ENCODE measurements at regions of chr2 and their contacts with region 1.

Region 1: DNA sequence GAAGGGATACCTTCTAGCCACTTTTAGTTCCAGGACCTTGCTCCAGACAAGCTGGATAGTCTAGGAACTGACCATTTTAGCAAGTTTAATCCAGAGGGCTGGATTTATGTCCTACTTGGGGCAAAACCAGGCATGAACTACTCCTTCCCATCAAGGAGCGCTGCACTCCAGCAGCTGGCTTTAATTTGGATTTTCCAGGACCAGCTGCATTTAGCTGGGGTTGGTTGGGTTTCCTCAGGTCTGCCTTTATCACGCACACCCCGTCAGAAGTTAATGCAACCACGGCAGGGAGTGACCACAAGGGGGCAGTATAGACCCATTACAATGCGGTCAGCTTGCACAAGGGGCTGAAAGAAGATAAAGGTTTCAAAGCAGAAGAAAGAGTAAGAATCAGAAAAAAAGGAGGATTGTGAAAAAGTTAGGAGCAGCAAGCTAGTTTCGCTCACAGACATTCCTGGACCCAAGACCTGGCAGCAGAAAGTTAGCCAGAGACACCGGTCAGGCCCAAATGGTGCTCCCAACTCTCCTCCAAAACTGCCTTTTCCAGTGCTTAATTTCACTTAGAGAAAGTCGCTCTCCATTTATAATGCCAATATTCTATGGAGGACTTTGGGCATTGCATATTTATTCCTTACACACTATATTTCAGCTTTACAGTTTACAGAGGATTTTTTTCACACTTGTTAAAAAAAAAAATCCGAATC is 40.1 kb downstream of the SLC4A1AP start:
- DNase-seq: peak; percentile 73 to 90 (median 84)
- ATAC-seq: peak; percentile 84
- H3K4me3 ChIP-seq: no peak overlapping the region
- H3K4me3 Mint-ChIP-seq: no peak overlapping the region
- H3K27ac ChIP-seq: no peak overlapping the region
- H3K27ac Mint-ChIP-seq: no peak overlapping the region
- H3K4me1 ChIP-seq: no peaks in the 10 kb centered on the region
- H3K4me1 Mint-ChIP-seq: peaks cover 3% of the 10 kb centered on the region
- H3K27me3 ChIP-seq: no peaks in the 10 kb centered on the region
- H3K27me3 Mint-ChIP-seq: no peaks in the 10 kb centered on the region
- CTCF ChIP-seq: peak; percentile 84

Region 2: DNA sequence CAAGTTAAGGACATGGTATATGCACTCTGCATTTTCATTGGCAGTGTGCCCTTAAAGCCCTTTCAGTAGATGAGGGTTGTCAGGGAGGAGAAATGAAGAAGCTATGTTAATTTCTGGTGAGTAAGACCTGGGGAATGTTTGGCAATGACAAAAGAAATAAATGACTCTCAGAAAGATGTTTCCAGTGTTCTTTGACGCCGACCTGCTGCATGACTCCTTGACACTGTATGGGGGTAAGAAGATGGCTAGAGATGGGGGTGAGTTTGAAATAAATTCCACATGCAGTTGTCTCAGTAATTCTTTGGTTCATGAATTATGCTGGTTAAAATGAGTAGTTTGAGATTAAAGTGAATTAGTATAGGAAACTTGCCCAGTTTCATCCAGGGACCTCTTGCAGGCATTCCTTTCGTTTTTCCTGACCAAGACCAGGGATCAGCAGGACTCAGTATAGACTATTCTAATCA is 80.8 kb before region 1 on chr2:
- CTCF ChIA-PET with region 1: no interaction called
- POLR2A ChIA-PET with region 1: no interaction called
- intact Hi-C with region 1: no loop called
- DNase-seq: no peak
- ATAC-seq: no peak
- H3K4me3 ChIP-seq: no peak overlapping the region
- H3K4me3 Mint-ChIP-seq: no peak overlapping the region
- H3K27ac ChIP-seq: no peak overlapping the region
- H3K27ac Mint-ChIP-seq: no peak overlapping the region
- H3K4me1 ChIP-seq: peaks cover 4% of the 10 kb centered on the region
- H3K4me1 Mint-ChIP-seq: peaks cover 3% of the 10 kb centered on the region
- H3K27me3 ChIP-seq: no peaks in the 10 kb centered on the region
- H3K27me3 Mint-ChIP-seq: no peaks in the 10 kb centered on the region
- CTCF ChIP-seq: no peak

Region 3: GRCh38 chr2:27715318-27716210 is 11.8 kb after region 1 on chr2:
- CTCF ChIA-PET with region 1: interaction called, 25 read pairs
- POLR2A ChIA-PET with region 1: no interaction called
- intact Hi-C with region 1: no loop called
- DNase-seq: peak in 5 of 9 experiments; percentile 18 to 58 (median 27)
- ATAC-seq: peak; percentile 63
- H3K4me3 ChIP-seq: peak overlapping the region in 1 of 2 experiments; percentile 27
- H3K4me3 Mint-ChIP-seq: peak overlapping the region; percentile 35
- H3K27ac ChIP-seq: no peak overlapping the region
- H3K27ac Mint-ChIP-seq: no peak overlapping the region
- H3K4me1 ChIP-seq: peaks cover 16% of the 10 kb centered on the region
- H3K4me1 Mint-ChIP-seq: peaks cover 20% of the 10 kb centered on the region
- H3K27me3 ChIP-seq: peaks cover 0 to 2% of the 10 kb centered on the region in 2 experiments
- H3K27me3 Mint-ChIP-seq: peaks cover 21% of the 10 kb centered on the region
- CTCF ChIP-seq: no peak

Region 4: GRCh38 chr2:28224648-28225472 is 521.1 kb after region 1 on chr2:
- CTCF ChIA-PET with region 1: no interaction called
- POLR2A ChIA-PET with region 1: no interaction called
- intact Hi-C with region 1: loop called in 1 of 2 experiments (anchors 10 kb)
- DNase-seq: no peak
- ATAC-seq: no peak
- H3K4me3 ChIP-seq: no peak overlapping the region
- H3K4me3 Mint-ChIP-seq: no peak overlapping the region
- H3K27ac ChIP-seq: no peak overlapping the region
- H3K27ac Mint-ChIP-seq: peak overlapping the region; percentile 35
- H3K4me1 ChIP-seq: no peaks in the 10 kb centered on the region
- H3K4me1 Mint-ChIP-seq: no peaks in the 10 kb centered on the region
- H3K27me3 ChIP-seq: no peaks in the 10 kb centered on the region
- H3K27me3 Mint-ChIP-seq: no peaks in the 10 kb centered on the region
- CTCF ChIP-seq: no peak